Activated naive CD4-positive, alpha-beta T cell treated with anti-CD3 and anti-CD28 coated beads for 36 hours (primary cell): ENCODE measurements at regions of chr19 and their contacts with region 1.

Region 1: DNA sequence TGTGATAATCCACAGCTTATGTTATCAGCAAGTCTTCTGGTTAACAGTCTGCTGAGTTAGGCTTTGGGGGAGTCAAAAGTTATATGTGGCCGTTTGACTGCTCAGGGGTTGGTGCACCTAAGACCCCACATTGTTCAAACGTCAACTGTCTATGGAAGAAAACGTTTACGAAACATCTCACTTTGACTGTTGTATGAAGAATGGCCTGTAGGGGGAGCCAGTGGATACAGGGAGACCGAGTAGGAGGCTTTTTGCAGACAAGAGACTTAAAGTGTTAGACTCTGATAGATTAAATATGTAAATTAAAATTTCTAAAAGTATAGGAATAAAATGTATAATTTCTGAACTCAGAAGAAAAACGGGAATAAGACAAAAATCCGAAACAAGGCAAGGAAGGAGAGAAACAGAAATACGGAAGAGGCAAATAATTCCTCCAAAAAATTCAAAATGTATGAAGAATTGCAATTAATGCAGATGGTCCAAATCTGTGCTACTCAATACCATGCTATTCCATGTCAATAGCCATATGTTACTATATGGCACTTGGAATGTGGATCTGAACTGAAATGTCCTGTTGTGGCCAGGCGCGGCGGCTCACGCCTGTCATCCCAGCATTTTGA is 37.8 kb downstream of the TNFSF14 start:
- DNase-seq: peak; percentile 94
- H3K4me3 Mint-ChIP-seq: no peak overlapping the region
- H3K27ac Mint-ChIP-seq: no peak overlapping the region
- H3K4me1 Mint-ChIP-seq: peaks cover 24% of the 10 kb centered on the region
- H3K27me3 Mint-ChIP-seq: peaks cover 4% of the 10 kb centered on the region

Region 2: GRCh38 chr19:6660930-6661329 is 28.8 kb after region 1 on chr19:
- CTCF ChIA-PET with region 1: interaction called, 7 read pairs
- intact Hi-C with region 1: loop called (anchors 2 kb)
- DNase-seq: no peak
- H3K4me3 Mint-ChIP-seq: peak overlapping the region; percentile 54
- H3K27ac Mint-ChIP-seq: no peak overlapping the region
- H3K4me1 Mint-ChIP-seq: peaks cover 19% of the 10 kb centered on the region
- H3K27me3 Mint-ChIP-seq: no peaks in the 10 kb centered on the region

Region 3: GRCh38 chr19:6674868-6675305 is 42.8 kb after region 1 on chr19:
- CTCF ChIA-PET with region 1: interaction called, 6 read pairs
- intact Hi-C with region 1: loop called (anchors 2 kb)
- DNase-seq: peak; percentile 97
- H3K4me3 Mint-ChIP-seq: peak overlapping the region; percentile 34
- H3K27ac Mint-ChIP-seq: peak overlapping the region; percentile 77
- H3K4me1 Mint-ChIP-seq: peaks cover 78% of the 10 kb centered on the region
- H3K27me3 Mint-ChIP-seq: no peaks in the 10 kb centered on the region

Region 4: GRCh38 chr19:6710273-6711077 is 78.4 kb after region 1 on chr19:
- CTCF ChIA-PET with region 1: interaction called, 5 read pairs
- intact Hi-C with region 1: loop called (anchors 2 kb)
- DNase-seq: peak; percentile 25
- H3K4me3 Mint-ChIP-seq: no peak overlapping the region
- H3K27ac Mint-ChIP-seq: no peak overlapping the region
- H3K4me1 Mint-ChIP-seq: peaks cover 14% of the 10 kb centered on the region
- H3K27me3 Mint-ChIP-seq: peaks cover 31% of the 10 kb centered on the region

Region 5: DNA sequence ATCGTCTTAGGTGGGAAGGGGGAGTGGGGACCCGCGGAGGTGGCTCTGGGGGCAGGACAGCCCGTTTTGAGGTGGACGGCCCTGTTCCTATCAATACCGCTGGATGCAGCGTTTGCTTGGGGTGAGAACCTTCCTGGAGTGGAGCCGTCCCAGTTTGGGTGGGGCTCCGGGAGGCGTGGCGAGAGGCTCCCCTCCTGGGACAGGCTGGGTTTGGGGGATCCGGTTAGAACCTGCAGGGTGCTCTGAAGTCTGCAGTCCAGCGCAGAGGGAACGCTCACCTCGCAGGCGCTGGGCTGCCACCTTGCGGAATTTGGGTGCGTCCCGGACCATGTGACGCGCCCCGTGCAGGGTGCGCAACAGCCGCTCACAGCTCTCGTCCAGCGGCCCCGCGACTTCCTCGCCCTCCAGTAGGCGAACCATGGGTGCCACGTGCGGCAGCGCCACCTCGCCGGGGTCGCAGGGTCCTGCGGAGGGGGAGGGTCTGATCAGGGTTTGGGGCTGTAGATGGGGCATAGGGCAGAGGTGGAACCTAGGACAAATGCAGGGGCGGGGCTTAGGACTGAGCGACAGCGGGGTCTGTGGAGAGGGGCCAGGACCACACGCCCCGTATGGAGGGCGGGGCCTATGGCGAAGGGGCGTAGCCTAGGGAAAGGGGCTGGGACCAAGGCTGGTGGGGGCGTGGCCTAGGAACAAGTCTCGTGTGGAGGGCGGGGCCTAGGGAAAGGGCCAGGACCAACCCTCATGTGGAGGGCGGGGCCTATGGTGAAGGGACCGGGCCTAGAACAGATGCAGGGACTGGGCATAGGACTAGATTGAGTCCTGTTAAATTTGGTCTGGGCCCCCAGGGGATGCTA is 121.3 kb after region 1 on chr19:
- CTCF ChIA-PET with region 1: no interaction called
- intact Hi-C with region 1: loop called (anchors 1 kb)
- DNase-seq: peak; percentile 90
- H3K4me3 Mint-ChIP-seq: peak overlapping the region; percentile 65
- H3K27ac Mint-ChIP-seq: peak overlapping the region; percentile 74
- H3K4me1 Mint-ChIP-seq: peaks cover 12% of the 10 kb centered on the region
- H3K27me3 Mint-ChIP-seq: no peaks in the 10 kb centered on the region

Region 6: GRCh38 chr19:6767357-6768235 is 135.5 kb after region 1 on chr19 and contains the start of gene SH2D3A:
- CTCF ChIA-PET with region 1: interaction called, 3 read pairs
- intact Hi-C with region 1: loop called (anchors 1 kb)
- DNase-seq: peak; percentile 98
- H3K4me3 Mint-ChIP-seq: peak within 1 kb of the TSS; percentile 94
- H3K27ac Mint-ChIP-seq: peak within 1 kb of the TSS; percentile 91
- H3K4me1 Mint-ChIP-seq: peaks cover 39% of the 10 kb centered on the region
- H3K27me3 Mint-ChIP-seq: no peaks in the 10 kb centered on the region
- total RNA-seq, gene SH2D3A: 23.2 to 24.9 TPM

Region 7: DNA sequence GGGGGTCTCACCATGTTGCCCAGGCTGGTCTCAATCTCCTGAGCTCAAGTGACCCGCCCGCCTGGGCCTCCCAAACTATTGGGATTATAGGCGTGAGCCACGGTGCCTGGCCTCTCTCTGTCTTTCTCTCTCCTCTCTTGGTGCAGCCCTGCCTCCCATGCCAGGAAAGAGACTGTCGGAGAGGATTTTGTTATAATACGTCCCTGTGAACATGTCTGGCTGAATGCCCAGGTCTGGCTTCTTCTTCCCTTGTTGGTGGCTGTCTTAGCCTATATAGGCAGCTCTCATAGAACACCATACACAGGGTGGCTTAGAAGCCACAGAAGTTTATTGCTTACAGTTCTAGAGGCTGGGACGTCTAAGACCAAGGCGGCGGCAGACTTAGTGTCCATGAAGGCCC is 810.3 kb after region 1 on chr19:
- CTCF ChIA-PET with region 1: no interaction called
- intact Hi-C with region 1: no loop called
- DNase-seq: no peak
- H3K4me3 Mint-ChIP-seq: no peak overlapping the region
- H3K27ac Mint-ChIP-seq: no peak overlapping the region
- H3K4me1 Mint-ChIP-seq: no peaks in the 10 kb centered on the region
- H3K27me3 Mint-ChIP-seq: no peaks in the 10 kb centered on the region